GM12878 (cell line): ENCODE measurements at regions of chr2 and their contacts with region 1.

Region 1: DNA sequence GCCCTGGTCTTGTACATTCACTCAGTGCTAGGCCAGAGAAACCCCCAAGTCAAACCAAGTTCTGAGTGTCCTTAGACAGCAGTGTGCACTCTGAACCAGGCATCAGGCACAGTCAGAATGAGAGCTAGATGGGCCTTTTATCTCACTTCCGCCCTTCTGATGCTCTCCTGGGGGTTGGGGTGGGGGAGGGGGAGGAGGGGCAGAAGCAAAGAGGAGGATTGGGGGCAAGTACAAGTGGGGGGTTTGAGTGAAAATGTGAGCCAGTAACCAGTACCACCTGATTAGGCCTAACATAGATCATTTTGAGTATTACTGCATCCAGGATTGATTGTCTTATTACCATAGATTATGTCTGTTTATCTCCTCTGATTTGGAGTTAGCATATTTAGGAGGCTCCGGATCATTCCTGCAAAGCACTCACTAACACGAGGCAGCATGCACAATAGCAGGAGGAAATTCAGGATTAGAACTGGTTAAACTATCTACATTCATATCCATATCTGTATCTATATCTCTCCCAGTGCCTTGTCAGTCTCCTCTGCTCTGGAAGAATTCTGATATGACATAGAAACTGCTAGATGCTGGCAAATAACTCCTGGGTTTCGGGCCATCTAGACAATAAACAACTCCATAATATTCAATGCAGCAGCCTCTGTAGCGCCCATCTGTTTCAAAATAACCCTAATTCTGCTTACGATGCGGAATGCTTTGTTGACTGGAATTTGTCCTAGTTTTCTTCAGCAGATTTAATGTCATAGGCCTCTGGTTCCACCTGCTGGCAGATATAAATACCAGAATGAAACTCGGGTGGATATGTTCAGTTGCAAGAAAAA is 149.1 kb downstream of the RHBDD1 start:
- DNase-seq: peak; percentile 47
- ATAC-seq: peak; percentile 98
- H3K4me3 ChIP-seq: no peak overlapping the region
- H3K27ac ChIP-seq: peak overlapping the region; percentile 38
- H3K4me1 ChIP-seq: peaks cover 15% of the 10 kb centered on the region
- H3K27me3 ChIP-seq: no peaks in the 10 kb centered on the region
- CTCF ChIP-seq: peak; percentile 55 to 66 (median 66); a peak in 5 of 6 replicates
- EP300 ChIP-seq: no peak
- POLR2A ChIP-seq: 0 out of 2 replicates have a peak, but pooled peaks have one; percentile 22
- RAD21 ChIP-seq: peak; percentile 95

Region 2: GRCh38 chr2:225660262-225661131 is 1324.5 kb before region 1 on chr2:
- CTCF ChIA-PET with region 1: interaction called, 3 read pairs
- POLR2A ChIA-PET with region 1: no interaction called
- RAD21 ChIA-PET with region 1: interaction called, 4 read pairs
- SMC1A ChIA-PET with region 1: no interaction called
- in situ Hi-C with region 1: loop called (anchors 10 kb)
- intact Hi-C with region 1: no loop called
- DNase-seq: peak; percentile 9
- ATAC-seq: peak; percentile 95
- H3K4me3 ChIP-seq: no peak overlapping the region
- H3K27ac ChIP-seq: no peak overlapping the region
- H3K4me1 ChIP-seq: no peaks in the 10 kb centered on the region
- H3K27me3 ChIP-seq: no peaks in the 10 kb centered on the region
- CTCF ChIP-seq: peak; percentile 85 to 90 (median 86)
- EP300 ChIP-seq: no peak
- POLR2A ChIP-seq: no peak
- RAD21 ChIP-seq: peak; percentile 94

Region 3: DNA sequence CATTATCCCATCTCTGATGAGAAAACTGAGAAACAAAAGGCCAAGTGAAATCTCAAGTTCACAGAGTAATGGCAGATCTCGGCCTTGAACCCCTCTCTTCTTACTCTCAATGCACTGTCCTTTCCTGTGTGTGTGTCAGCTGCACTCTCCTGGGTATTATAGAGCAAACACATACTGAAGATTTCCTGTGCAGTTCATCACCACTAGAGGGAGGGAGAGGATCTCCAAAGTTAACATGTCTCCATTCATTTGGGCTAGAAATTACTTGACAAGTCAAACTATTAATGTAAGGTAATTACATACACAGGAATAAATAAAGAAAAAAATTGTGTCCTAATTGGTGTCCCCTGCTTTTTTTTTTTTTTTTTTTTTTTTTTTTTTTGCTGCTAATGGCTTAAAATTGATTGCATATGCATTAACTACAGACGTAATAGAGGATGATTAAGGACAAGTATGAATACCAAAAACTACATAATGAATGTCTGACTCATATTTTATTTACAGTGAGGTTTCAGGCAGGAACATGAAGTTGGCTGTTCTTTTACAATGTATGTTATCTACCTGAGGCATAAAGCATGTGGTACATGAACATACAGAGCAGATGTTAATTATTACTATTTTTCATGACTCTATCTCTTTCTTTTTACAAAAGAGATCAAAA is 1316.2 kb before region 1 on chr2:
- CTCF ChIA-PET with region 1: interaction called, 3 read pairs
- POLR2A ChIA-PET with region 1: no interaction called
- RAD21 ChIA-PET with region 1: interaction called, 4 read pairs
- SMC1A ChIA-PET with region 1: interaction called, 3 read pairs
- in situ Hi-C with region 1: loop called (anchors 10 kb)
- intact Hi-C with region 1: loop called (anchors 1 kb)
- DNase-seq: peak; percentile 12
- ATAC-seq: peak; percentile 94
- H3K4me3 ChIP-seq: no peak overlapping the region
- H3K27ac ChIP-seq: no peak overlapping the region
- H3K4me1 ChIP-seq: no peaks in the 10 kb centered on the region
- H3K27me3 ChIP-seq: no peaks in the 10 kb centered on the region
- CTCF ChIP-seq: peak; percentile 72 to 75 (median 73)
- EP300 ChIP-seq: no peak
- POLR2A ChIP-seq: no peak
- RAD21 ChIP-seq: peak; percentile 71

Region 4: GRCh38 chr2:225889446-225889850 is 1095.5 kb before region 1 on chr2:
- CTCF ChIA-PET with region 1: interaction called, 3 read pairs
- POLR2A ChIA-PET with region 1: no interaction called
- RAD21 ChIA-PET with region 1: interaction called, 3 read pairs
- SMC1A ChIA-PET with region 1: interaction called, 3 read pairs
- in situ Hi-C with region 1: loop called (anchors 10 kb)
- intact Hi-C with region 1: loop called (anchors 5 kb)
- DNase-seq: no peak
- ATAC-seq: peak; percentile 66
- H3K4me3 ChIP-seq: no peak overlapping the region
- H3K27ac ChIP-seq: no peak overlapping the region
- H3K4me1 ChIP-seq: no peaks in the 10 kb centered on the region
- H3K27me3 ChIP-seq: no peaks in the 10 kb centered on the region
- CTCF ChIP-seq: peak; percentile 52 to 59 (median 57); a peak in 5 of 6 replicates
- EP300 ChIP-seq: no peak
- POLR2A ChIP-seq: no peak
- RAD21 ChIP-seq: peak; percentile 69

Region 5: DNA sequence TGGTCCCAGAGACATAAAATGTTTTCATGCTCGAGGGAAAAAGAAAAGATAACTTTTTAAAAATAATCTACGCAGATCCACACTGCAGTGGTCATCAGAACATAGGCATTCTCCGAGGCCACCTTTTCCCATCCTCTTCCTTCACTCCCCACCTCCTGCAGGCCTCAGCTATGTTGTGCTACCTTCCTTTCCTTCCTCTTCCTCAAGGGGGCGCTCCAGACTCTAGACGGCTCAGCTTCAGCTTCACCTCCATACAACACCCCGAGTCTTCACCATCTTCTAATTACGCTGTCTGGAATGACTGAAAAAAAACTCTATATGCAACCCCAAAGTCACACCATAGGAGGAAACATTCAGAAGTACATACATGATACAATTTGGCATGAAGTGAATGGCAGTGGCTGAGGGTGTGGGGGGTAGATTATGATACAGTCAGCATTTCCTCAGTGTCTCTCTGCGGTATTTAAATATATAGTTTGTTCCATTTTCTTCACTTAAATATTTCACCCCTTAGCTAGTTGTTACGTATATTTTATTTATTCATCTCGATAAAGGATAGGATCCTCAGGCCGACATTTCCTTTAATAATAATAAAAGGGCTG is 769.0 kb before region 1 on chr2:
- CTCF ChIA-PET with region 1: interaction called, 4 read pairs
- POLR2A ChIA-PET with region 1: no interaction called
- RAD21 ChIA-PET with region 1: no interaction called
- SMC1A ChIA-PET with region 1: interaction called, 4 read pairs
- in situ Hi-C with region 1: loop called (anchors 25 kb)
- intact Hi-C with region 1: loop called (anchors 5 kb)
- DNase-seq: no peak
- ATAC-seq: peak; percentile 96
- H3K4me3 ChIP-seq: no peak overlapping the region
- H3K27ac ChIP-seq: no peak overlapping the region
- H3K4me1 ChIP-seq: no peaks in the 10 kb centered on the region
- H3K27me3 ChIP-seq: no peaks in the 10 kb centered on the region
- CTCF ChIP-seq: peak; percentile 56 to 64 (median 59)
- EP300 ChIP-seq: no peak
- POLR2A ChIP-seq: no peak
- RAD21 ChIP-seq: peak; percentile 81

Region 6: GRCh38 chr2:226813148-226813701 is 171.7 kb before region 1 on chr2:
- CTCF ChIA-PET with region 1: interaction called, 4 read pairs
- POLR2A ChIA-PET with region 1: no interaction called
- RAD21 ChIA-PET with region 1: interaction called, 6 read pairs
- SMC1A ChIA-PET with region 1: interaction called, 12 read pairs
- in situ Hi-C with region 1: loop called (anchors 5 kb)
- intact Hi-C with region 1: loop called (anchors 1 kb)
- DNase-seq: no peak
- ATAC-seq: peak; percentile 79
- H3K4me3 ChIP-seq: no peak overlapping the region
- H3K27ac ChIP-seq: no peak overlapping the region
- H3K4me1 ChIP-seq: no peaks in the 10 kb centered on the region
- H3K27me3 ChIP-seq: no peaks in the 10 kb centered on the region; a peak in 1 of 4 replicates
- CTCF ChIP-seq: peak; percentile 60 to 70 (median 63)
- EP300 ChIP-seq: no peak
- POLR2A ChIP-seq: no peak
- RAD21 ChIP-seq: peak; percentile 92

Region 7: GRCh38 chr2:226835796-226836547 is 149.0 kb before region 1 on chr2 and contains the start of gene RHBDD1:
- CTCF ChIA-PET with region 1: interaction called, 12 read pairs
- POLR2A ChIA-PET with region 1: no interaction called
- RAD21 ChIA-PET with region 1: interaction called, 4 read pairs
- SMC1A ChIA-PET with region 1: interaction called, 3 read pairs
- in situ Hi-C with region 1: no loop called
- intact Hi-C with region 1: no loop called
- DNase-seq: peak; percentile 86
- ATAC-seq: peak; percentile 88
- H3K4me3 ChIP-seq: peak within 1 kb of the TSS; percentile 79
- H3K27ac ChIP-seq: peak within 1 kb of the TSS; percentile 97
- H3K4me1 ChIP-seq: peaks cover 6% of the 10 kb centered on the region; the same call in 1 of the 2 replicates
- H3K27me3 ChIP-seq: no peaks in the 10 kb centered on the region
- CTCF ChIP-seq: no peak
- EP300 ChIP-seq: peak; percentile 36 to 49
- POLR2A ChIP-seq: peak; percentile 98
- RAD21 ChIP-seq: 0 out of 2 replicates have a peak, but pooled peaks have one; percentile 7
- polyA plus RNA-seq, gene RHBDD1: 7.1 to 7.3 TPM